ENCODE measurements at regions of chr11 and their contacts with region 1.

Region 1: DNA sequence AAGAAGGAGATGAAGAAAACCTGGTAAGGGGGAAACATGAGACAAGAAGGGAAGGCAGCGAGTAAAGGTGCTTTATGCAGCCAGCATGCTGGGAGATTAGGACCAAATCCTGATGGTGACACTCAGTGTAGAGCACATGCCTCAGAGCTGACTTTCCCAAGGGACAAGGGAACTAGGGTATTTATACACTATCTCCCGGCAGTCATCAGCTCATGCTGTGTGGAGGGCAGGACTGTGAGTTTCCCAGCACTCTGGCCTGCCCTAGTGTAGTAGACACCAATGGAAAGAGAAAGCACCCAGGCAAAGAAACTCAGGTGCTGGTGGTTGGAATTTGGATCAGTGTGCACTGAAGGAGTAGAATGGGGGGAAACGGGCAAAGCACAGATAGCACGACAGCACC is 128.3 kb upstream of the CSNK2A3 start:
- DNase-seq: no peak
- ATAC-seq: no peak
- H3K4me3 ChIP-seq: no peak overlapping the region
- H3K27ac ChIP-seq: no peak overlapping the region
- H3K4me1 ChIP-seq: no peaks in the 10 kb centered on the region
- H3K27me3 ChIP-seq: no peaks in the 10 kb centered on the region
- CTCF ChIP-seq: no peak

Region 2: DNA sequence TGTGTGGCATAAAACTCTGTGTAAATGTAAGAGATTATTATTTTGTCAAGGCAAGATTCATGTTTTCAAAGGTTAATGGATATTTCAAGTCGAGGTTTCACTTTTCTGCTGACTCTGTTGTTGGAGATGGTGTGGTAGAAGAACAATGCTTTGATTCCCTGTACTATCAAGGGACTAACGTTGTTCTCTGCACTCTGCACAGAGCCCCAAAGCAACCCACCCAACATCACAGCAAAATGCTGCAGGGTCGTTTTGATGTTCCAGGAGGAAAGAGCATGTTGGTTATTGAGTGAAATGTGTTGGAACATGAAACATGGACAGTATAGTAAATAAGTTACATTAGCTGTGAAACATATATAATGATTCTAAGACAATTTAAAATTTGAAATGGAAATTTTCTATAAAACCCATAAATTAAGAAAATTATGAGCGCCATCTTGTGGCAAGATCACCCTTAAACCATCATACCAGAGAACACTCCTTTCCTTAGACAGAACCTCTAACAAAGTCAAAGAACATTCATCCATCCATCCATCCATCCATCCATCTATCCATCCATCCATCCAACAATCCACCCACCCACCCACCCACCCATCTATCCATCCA is 459.1 kb before region 1 on chr11:
- CTCF ChIA-PET with region 1: no interaction called
- POLR2A ChIA-PET with region 1: no interaction called
- in situ Hi-C with region 1: no loop called
- intact Hi-C with region 1: no loop called
- DNase-seq: no peak
- ATAC-seq: peak; percentile 70; the same call in 1 of the 2 replicates
- H3K4me3 ChIP-seq: no peak overlapping the region
- H3K27ac ChIP-seq: peak overlapping the region; percentile 69; the same call in 1 of the 2 replicates
- H3K4me1 ChIP-seq: 0 out of 2 replicates have a peak, but pooled peaks cover 5% of the 10 kb centered on the region
- H3K27me3 ChIP-seq: no peaks in the 10 kb centered on the region
- CTCF ChIP-seq: peak; percentile 73

Region 3: GRCh38 chr11:11416502-11416901 is 64.9 kb before region 1 on chr11:
- CTCF ChIA-PET with region 1: no interaction called
- POLR2A ChIA-PET with region 1: no interaction called
- in situ Hi-C with region 1: no loop called
- intact Hi-C with region 1: no loop called
- DNase-seq: no peak
- ATAC-seq: no peak
- H3K4me3 ChIP-seq: no peak overlapping the region
- H3K27ac ChIP-seq: no peak overlapping the region
- H3K4me1 ChIP-seq: no peaks in the 10 kb centered on the region
- H3K27me3 ChIP-seq: no peaks in the 10 kb centered on the region
- CTCF ChIP-seq: no peak

Region 4: DNA sequence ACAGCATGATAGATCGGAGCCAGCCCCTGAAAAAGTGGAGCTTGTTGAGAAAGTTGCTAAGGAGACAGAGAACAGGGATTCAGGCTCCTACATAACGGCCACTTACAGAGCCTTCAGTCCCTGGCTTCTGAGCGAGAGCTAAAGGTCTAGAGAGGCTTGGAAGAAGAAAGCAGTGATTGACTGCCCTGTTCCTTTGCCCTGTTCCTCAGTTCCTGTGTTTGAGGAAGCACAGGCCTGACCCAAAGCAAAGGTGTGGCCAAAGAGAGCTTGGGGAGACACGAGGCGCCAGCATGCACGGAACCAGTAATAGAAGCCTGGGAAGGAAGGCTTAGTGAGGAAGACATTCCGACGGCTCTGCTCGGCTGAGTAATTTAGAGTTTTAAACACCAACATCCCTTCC is 54.2 kb before region 1 on chr11:
- CTCF ChIA-PET with region 1: no interaction called
- POLR2A ChIA-PET with region 1: no interaction called
- in situ Hi-C with region 1: no loop called
- intact Hi-C with region 1: no loop called
- DNase-seq: no peak
- ATAC-seq: no peak
- H3K4me3 ChIP-seq: no peak overlapping the region
- H3K27ac ChIP-seq: no peak overlapping the region
- H3K4me1 ChIP-seq: no peaks in the 10 kb centered on the region
- H3K27me3 ChIP-seq: no peaks in the 10 kb centered on the region
- CTCF ChIP-seq: no peak

Region 5: DNA sequence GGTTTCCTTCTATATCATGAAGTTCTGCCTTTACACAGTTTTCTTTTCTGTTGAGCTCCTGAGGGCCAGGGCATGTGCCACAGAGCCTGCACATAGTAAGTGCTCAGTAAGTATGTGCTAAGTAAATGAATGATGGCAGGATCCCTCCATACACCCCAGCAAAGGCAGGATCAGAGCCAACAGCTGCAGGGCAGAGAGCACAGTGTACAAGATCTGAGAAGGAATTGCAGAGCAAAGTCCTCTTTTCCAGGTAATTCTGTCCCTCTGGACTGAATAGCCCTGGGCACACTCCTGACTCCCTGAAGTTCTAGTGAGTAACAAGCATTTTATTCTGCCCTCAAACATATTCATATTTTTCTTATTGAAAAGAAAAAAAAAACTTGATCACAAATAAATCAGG is 22.7 kb after region 1 on chr11:
- CTCF ChIA-PET with region 1: no interaction called
- POLR2A ChIA-PET with region 1: interaction called, 11 read pairs
- in situ Hi-C with region 1: no loop called
- intact Hi-C with region 1: no loop called
- DNase-seq: no peak
- ATAC-seq: no peak
- H3K4me3 ChIP-seq: no peak overlapping the region
- H3K27ac ChIP-seq: no peak overlapping the region
- H3K4me1 ChIP-seq: no peaks in the 10 kb centered on the region
- H3K27me3 ChIP-seq: no peaks in the 10 kb centered on the region
- CTCF ChIP-seq: no peak

Region 6: DNA sequence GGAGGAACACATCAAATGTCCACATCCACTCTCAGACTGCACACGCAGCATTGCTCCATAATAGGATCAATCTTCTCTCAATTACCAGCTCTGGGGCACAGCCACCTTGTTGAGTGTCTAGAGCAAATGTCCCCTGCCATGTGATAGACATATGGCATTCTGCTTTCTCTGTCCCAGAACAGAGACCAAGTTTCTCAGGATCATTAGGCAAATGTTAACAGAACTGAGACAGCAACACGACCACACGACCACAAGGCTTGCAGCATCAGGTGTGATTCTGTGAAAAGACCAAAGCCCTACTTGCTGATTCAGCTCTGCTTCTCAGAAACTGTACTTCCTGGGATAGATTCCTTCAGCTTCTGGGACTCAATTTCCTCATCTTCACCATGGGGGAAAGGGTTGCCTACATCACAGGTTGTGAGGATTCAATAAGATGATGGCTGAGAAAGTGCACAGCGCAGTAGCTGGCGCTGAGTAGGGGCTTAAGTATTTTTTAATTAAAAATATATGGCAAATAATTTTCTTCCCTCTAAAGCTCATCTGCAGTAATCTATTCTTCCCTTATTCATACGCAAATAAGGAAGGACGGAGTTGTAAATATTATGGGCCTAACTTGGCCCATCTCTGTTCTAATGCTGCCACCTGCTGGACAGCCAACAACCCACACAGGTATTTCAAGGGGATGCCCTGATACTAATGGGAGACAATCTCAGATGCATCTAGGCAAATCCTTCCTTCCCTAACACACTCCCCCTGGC is 306.1 kb after region 1 on chr11:
- CTCF ChIA-PET with region 1: no interaction called
- POLR2A ChIA-PET with region 1: no interaction called
- in situ Hi-C with region 1: no loop called
- intact Hi-C with region 1: no loop called
- DNase-seq: peak; percentile 59
- ATAC-seq: peak; percentile 97
- H3K4me3 ChIP-seq: no peak overlapping the region
- H3K27ac ChIP-seq: no peak overlapping the region
- H3K4me1 ChIP-seq: no peaks in the 10 kb centered on the region; the same call in 1 of the 2 replicates
- H3K27me3 ChIP-seq: no peaks in the 10 kb centered on the region
- CTCF ChIP-seq: peak; percentile 83

Measured in Panc1 (cell line).